ENCODE measurements at regions of chr6 and their contacts with region 1.

Region 1: GRCh38 chr6:119110601-119111548 is 32.4 kb upstream of the FAM184A start:
- DNase-seq: peak; percentile 46 to 67 (median 65)
- H3K4me3 ChIP-seq: no peak overlapping the region
- H3K4me3 Mint-ChIP-seq: peak overlapping the region in 2 of 8 donors; percentile 13 to 27
- H3K27ac ChIP-seq: no peak overlapping the region
- H3K27ac Mint-ChIP-seq: no peak overlapping the region
- H3K4me1 ChIP-seq: no peaks in the 10 kb centered on the region
- H3K4me1 Mint-ChIP-seq: peaks cover 7 to 12% (median 9%) of the 10 kb centered on the region in 4 donors
- H3K27me3 ChIP-seq: no peaks in the 10 kb centered on the region
- H3K27me3 Mint-ChIP-seq: peaks cover 0 to 1% of the 10 kb centered on the region in 2 donors

Region 2: DNA sequence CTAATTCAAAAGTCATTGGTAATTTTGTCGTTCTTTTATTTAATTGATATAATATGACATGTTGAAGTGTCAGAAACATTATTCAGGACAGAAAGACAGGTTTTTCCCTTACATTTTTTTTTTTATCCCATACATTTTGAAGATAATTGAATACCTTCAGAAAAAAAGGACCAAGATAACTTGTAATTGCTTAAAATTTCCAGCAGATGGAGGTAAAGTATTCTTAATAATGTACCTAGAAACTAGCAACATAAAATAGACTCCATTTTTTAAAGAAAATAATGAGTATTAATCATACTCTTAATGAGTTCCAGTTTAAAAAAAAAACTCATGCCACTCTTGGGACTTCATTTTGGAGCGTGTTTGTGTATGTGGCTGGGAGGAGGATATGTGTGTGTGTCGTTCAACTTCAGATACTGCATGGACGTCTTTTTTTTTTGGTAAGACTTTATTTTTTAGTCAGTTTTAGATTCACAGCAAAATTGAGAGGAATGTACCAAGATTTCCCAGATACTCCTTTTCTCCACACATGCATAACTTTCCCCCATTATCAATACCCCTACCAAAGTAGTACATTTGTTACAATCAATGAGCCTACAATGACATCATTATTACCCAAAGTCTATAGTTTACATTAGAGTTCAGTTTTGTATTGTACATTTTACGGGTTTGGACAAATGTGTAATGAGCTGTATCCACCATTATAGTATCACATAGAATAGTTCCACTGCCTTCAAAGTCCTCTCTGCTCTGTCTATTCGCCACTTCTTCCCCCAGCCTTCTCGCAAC is 1764.5 kb before region 1 on chr6:
- CTCF ChIA-PET with region 1: no interaction called
- POLR2A ChIA-PET with region 1: no interaction called
- intact Hi-C with region 1: loop called (anchors 5 kb)
- DNase-seq: peak in 4 of 5 donors; percentile 22 to 31 (median 28)
- H3K4me3 ChIP-seq: no peak overlapping the region
- H3K4me3 Mint-ChIP-seq: peak overlapping the region in 1 of 8 donors; percentile 12
- H3K27ac ChIP-seq: no peak overlapping the region
- H3K27ac Mint-ChIP-seq: no peak overlapping the region
- H3K4me1 ChIP-seq: no peaks in the 10 kb centered on the region
- H3K4me1 Mint-ChIP-seq: no peaks in the 10 kb centered on the region
- H3K27me3 ChIP-seq: no peaks in the 10 kb centered on the region
- H3K27me3 Mint-ChIP-seq: peaks cover 5 to 6% of the 10 kb centered on the region in 2 donors

Region 3: GRCh38 chr6:118618679-118619377 is 492.0 kb before region 1 on chr6:
- CTCF ChIA-PET with region 1: interaction called, 4 read pairs
- POLR2A ChIA-PET with region 1: no interaction called
- intact Hi-C with region 1: loop called (anchors 2 kb)
- DNase-seq: peak; percentile 54 to 62 (median 57)
- H3K4me3 ChIP-seq: no peak overlapping the region
- H3K4me3 Mint-ChIP-seq: peak overlapping the region in 4 of 8 donors; percentile 8 to 59 (median 42)
- H3K27ac ChIP-seq: no peak overlapping the region
- H3K27ac Mint-ChIP-seq: peak overlapping the region in 6 of 7 donors; percentile 79 to 93 (median 84)
- H3K4me1 ChIP-seq: peaks cover 22% of the 10 kb centered on the region
- H3K4me1 Mint-ChIP-seq: peaks cover 41 to 72% (median 54%) of the 10 kb centered on the region in 4 donors
- H3K27me3 ChIP-seq: no peaks in the 10 kb centered on the region
- H3K27me3 Mint-ChIP-seq: no peaks in the 10 kb centered on the region

Region 4: GRCh38 chr6:118830691-118831090 is 280.2 kb before region 1 on chr6:
- CTCF ChIA-PET with region 1: no interaction called
- POLR2A ChIA-PET with region 1: no interaction called
- intact Hi-C with region 1: no loop called
- DNase-seq: no peak
- H3K4me3 ChIP-seq: no peak overlapping the region
- H3K4me3 Mint-ChIP-seq: no peak overlapping the region
- H3K27ac ChIP-seq: no peak overlapping the region
- H3K27ac Mint-ChIP-seq: peak overlapping the region in 3 of 7 donors; percentile 2 to 11 (median 2)
- H3K4me1 ChIP-seq: no peaks in the 10 kb centered on the region
- H3K4me1 Mint-ChIP-seq: peaks cover 5 to 7% (median 6%) of the 10 kb centered on the region in 4 donors
- H3K27me3 ChIP-seq: no peaks in the 10 kb centered on the region
- H3K27me3 Mint-ChIP-seq: no peaks in the 10 kb centered on the region

Region 5: DNA sequence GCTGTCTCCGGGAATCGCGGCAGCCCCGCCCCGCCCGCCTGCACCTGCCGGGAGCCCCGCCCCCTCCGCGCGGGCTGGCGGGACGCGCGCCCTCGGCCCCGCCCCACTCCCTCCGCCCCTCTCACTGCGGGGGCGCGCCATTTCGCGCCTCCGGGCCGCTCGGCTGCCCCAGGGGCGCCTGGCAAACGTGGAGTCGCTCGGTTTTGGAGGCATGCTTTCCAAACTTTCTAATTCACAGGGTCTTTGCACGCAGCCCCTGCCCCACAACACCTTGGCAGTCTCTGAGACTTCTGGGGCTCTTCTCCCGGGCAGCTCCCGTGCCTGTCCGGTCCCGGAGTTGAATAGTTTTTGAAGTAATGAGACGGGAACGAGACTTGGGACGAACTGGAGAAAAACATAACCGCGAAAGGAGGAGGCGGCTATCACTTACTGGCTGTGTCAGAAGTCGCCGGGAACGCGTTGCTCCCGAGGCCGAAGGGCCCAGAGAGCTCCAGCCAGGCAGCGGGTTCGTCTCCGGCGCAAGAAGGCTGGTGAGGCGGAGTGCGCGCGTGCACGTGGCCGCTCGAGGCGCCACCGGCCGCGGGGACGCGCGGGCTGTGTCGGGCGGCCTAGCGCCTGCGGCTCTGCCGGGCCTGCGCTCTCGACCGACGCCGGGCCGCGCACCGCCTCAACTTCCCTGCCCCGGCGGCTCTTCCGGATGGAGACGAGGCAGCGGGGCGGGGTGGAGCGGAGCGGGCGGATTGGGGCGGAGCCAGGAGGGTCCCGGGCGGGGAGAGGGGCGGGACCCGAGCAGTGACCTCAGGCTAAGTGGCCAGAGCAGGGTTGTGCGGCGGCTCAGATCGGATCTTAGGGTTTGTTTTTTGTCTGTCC is 176.2 kb before region 1 on chr6 and contains the start of gene MCM9:
- CTCF ChIA-PET with region 1: no interaction called
- POLR2A ChIA-PET with region 1: no interaction called
- intact Hi-C with region 1: no loop called
- DNase-seq: peak; percentile 84 to 88 (median 85)
- H3K4me3 ChIP-seq: peak within 1 kb of the TSS; percentile 88 to 98
- H3K4me3 Mint-ChIP-seq: peak within 1 kb of the TSS; percentile 90 to 94 (median 91)
- H3K27ac ChIP-seq: peak within 1 kb of the TSS; percentile 84
- H3K27ac Mint-ChIP-seq: peak within 1 kb of the TSS; percentile 89 to 96 (median 93)
- H3K4me1 ChIP-seq: peaks cover 19% of the 10 kb centered on the region
- H3K4me1 Mint-ChIP-seq: peaks cover 21 to 43% (median 25%) of the 10 kb centered on the region in 4 donors
- H3K27me3 ChIP-seq: no peaks in the 10 kb centered on the region
- H3K27me3 Mint-ChIP-seq: no peaks in the 10 kb centered on the region
- total RNA-seq, gene MCM9: 33.8 to 36.6 TPM

Region 6: DNA sequence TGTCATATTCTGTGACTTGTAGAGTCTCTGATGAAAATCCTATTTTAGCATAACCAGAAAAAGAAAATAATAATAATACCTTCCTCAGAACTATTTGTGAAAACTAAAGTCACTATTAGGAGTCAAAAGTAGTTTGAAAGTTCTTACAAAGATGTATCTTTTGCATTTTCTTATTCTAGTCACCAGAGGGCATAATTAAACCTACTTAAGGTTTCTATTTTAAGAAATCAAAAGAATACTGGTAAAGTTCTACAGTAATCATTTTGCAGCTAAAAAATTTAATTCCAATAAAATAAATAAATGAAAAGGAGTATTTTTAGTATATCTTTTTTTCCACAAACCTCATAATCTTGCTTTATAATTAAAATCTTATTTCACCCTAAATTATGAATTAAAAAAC is 147.9 kb before region 1 on chr6:
- CTCF ChIA-PET with region 1: interaction called, 245 read pairs
- POLR2A ChIA-PET with region 1: interaction called, 10 read pairs
- intact Hi-C with region 1: loop called (anchors 1 kb)
- DNase-seq: peak in 3 of 5 donors; percentile 4 to 16 (median 12)
- H3K4me3 ChIP-seq: no peak overlapping the region
- H3K4me3 Mint-ChIP-seq: no peak overlapping the region
- H3K27ac ChIP-seq: no peak overlapping the region
- H3K27ac Mint-ChIP-seq: no peak overlapping the region
- H3K4me1 ChIP-seq: no peaks in the 10 kb centered on the region
- H3K4me1 Mint-ChIP-seq: peaks cover 0 to 6% (median 4%) of the 10 kb centered on the region in 4 donors
- H3K27me3 ChIP-seq: no peaks in the 10 kb centered on the region
- H3K27me3 Mint-ChIP-seq: no peaks in the 10 kb centered on the region

Region 7: GRCh38 chr6:119078376-119079282 is 32.2 kb before region 1 on chr6 and contains the start of gene FAM184A:
- CTCF ChIA-PET with region 1: interaction called, 15 read pairs
- POLR2A ChIA-PET with region 1: interaction called, 12 read pairs
- intact Hi-C with region 1: loop called (anchors 1 kb)
- DNase-seq: peak; percentile 81 to 84 (median 82)
- H3K4me3 ChIP-seq: peak within 1 kb of the TSS; percentile 68 to 80
- H3K4me3 Mint-ChIP-seq: peak within 1 kb of the TSS; percentile 90 to 98 (median 96)
- H3K27ac ChIP-seq: peak within 1 kb of the TSS; percentile 38
- H3K27ac Mint-ChIP-seq: peak within 1 kb of the TSS; percentile 90 to 98 (median 95)
- H3K4me1 ChIP-seq: peaks cover 35% of the 10 kb centered on the region
- H3K4me1 Mint-ChIP-seq: peaks cover 30 to 39% (median 33%) of the 10 kb centered on the region in 4 donors
- H3K27me3 ChIP-seq: no peaks in the 10 kb centered on the region
- H3K27me3 Mint-ChIP-seq: no peaks in the 10 kb centered on the region
- total RNA-seq, gene FAM184A: 5.6 to 6.1 TPM

Region 8: DNA sequence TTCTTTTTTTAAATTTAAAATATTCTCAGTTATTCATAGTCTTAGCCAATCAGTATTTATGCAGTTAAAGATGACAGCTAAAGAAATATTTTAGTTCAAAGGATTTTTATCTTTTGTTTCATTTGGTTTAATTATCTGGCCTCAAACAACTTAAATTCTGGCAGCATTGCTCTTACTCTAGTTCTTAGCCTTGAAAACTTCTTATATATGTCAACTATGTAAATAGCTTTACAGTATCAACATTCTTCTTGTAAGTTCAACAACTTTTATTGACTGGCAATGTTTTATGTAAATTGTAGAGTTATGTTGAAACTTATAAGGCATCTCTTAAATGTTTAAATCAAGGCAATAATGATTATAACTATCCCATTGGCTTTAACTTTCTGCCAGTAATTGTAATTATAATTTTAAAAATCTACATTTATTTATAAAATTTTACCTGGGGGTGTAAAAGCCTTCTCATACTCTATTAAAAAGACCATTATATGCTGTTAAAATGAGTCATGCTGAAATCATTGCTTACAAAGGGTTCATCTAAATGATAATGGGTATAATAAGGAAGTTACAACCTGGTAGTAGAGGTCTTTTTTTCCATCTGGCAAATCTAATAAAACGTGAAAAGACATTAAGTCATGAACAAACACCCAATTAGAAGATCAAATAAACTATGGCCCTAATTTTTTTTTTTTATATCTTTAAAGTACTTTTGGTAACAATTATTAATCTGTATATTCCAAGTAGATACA is 13.4 kb after region 1 on chr6:
- CTCF ChIA-PET with region 1: interaction called, 29 read pairs
- POLR2A ChIA-PET with region 1: no interaction called
- intact Hi-C with region 1: no loop called
- DNase-seq: no peak
- H3K4me3 ChIP-seq: no peak overlapping the region
- H3K4me3 Mint-ChIP-seq: no peak overlapping the region
- H3K27ac ChIP-seq: no peak overlapping the region
- H3K27ac Mint-ChIP-seq: no peak overlapping the region
- H3K4me1 ChIP-seq: peaks cover 3% of the 10 kb centered on the region
- H3K4me1 Mint-ChIP-seq: peaks cover 0 to 2% (median under 1%) of the 10 kb centered on the region in 4 donors
- H3K27me3 ChIP-seq: no peaks in the 10 kb centered on the region
- H3K27me3 Mint-ChIP-seq: no peaks in the 10 kb centered on the region

Region 9: DNA sequence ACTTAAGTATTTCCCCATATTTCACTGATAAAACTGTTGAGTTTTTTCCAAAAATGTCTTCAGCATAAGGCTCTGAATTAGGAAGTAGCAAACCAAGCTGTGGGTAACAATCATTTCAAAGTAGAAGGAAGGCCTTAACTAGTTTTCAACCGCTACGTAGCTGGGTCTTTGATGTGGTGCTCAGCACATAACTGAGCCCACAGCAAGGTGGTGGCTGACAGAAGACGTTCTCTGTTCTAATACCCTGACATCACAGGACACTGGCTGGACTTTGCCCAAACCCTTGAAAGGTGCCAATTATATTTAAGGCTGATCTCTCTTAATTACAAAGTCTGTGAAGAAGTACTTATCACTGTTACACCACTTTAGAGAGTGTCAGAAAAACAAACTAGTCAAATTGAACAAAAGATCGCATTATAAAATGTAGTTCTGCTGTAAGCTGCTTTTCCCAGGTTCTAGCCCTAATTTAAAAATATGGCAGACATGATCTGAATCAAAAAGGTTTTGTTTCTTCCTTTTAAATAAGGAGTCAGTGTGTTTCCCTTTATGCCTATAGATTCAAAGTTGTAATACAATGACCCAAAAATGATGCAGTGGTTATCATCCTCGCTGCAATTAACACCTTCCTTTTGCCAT is 212.0 kb after region 1 on chr6:
- CTCF ChIA-PET with region 1: no interaction called
- POLR2A ChIA-PET with region 1: no interaction called
- intact Hi-C with region 1: no loop called
- DNase-seq: peak; percentile 55 to 68 (median 63)
- H3K4me3 ChIP-seq: no peak overlapping the region
- H3K4me3 Mint-ChIP-seq: peak overlapping the region in 6 of 8 donors; percentile 17 to 68 (median 40)
- H3K27ac ChIP-seq: no peak overlapping the region
- H3K27ac Mint-ChIP-seq: peak overlapping the region in 6 of 7 donors; percentile 19 to 92 (median 70)
- H3K4me1 ChIP-seq: peaks cover 20% of the 10 kb centered on the region
- H3K4me1 Mint-ChIP-seq: peaks cover 18 to 24% (median 20%) of the 10 kb centered on the region in 4 donors
- H3K27me3 ChIP-seq: no peaks in the 10 kb centered on the region
- H3K27me3 Mint-ChIP-seq: no peaks in the 10 kb centered on the region

Region 10: DNA sequence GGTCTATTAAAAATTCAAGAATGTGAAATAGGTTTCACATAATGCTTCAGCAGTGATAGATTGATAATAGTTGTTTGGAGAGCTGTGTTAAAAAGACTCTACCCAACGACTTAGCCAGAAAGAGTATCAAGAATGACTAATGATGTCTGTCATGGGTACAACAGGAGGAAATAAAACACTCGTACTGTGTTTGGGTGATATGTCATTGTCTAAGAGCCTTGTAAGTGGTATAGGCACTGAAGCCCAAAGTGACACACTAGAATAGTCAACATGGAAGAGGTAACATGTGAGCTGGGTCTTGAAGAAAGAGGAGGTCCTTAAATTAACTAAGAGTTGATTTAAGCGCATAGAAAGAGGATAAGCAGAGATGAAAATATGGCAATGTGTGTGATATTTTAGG is 710.5 kb after region 1 on chr6:
- CTCF ChIA-PET with region 1: no interaction called
- POLR2A ChIA-PET with region 1: no interaction called
- intact Hi-C with region 1: no loop called
- DNase-seq: no peak
- H3K4me3 ChIP-seq: no peak overlapping the region
- H3K4me3 Mint-ChIP-seq: no peak overlapping the region
- H3K27ac ChIP-seq: no peak overlapping the region
- H3K27ac Mint-ChIP-seq: no peak overlapping the region
- H3K4me1 ChIP-seq: no peaks in the 10 kb centered on the region
- H3K4me1 Mint-ChIP-seq: no peaks in the 10 kb centered on the region
- H3K27me3 ChIP-seq: no peaks in the 10 kb centered on the region
- H3K27me3 Mint-ChIP-seq: no peaks in the 10 kb centered on the region